PC-3 (cell line): ENCODE measurements at regions of chr2 and their contacts with region 1.

Region 1: GRCh38 chr2:240579771-240580614 is 6.5 kb upstream of the CAPN10 start:
- DNase-seq: peak; percentile 93
- ATAC-seq: peak; percentile 92
- H3K4me3 ChIP-seq: peak overlapping the region; percentile 48; the same call in 1 of the 2 replicates
- H3K27ac ChIP-seq: peak overlapping the region; percentile 91
- H3K4me1 ChIP-seq: peaks cover 52% of the 10 kb centered on the region
- H3K27me3 ChIP-seq: no peaks in the 10 kb centered on the region
- CTCF ChIP-seq: peak; percentile 57

Region 2: GRCh38 chr2:240560480-240561326 is 19.3 kb before region 1 on chr2:
- CTCF ChIA-PET with region 1: interaction called, 31 read pairs
- POLR2A ChIA-PET with region 1: interaction called, 10 read pairs
- intact Hi-C with region 1: loop called (anchors 1 kb)
- DNase-seq: peak; percentile 96
- ATAC-seq: peak; percentile 75
- H3K4me3 ChIP-seq: peak overlapping the region; percentile 77
- H3K27ac ChIP-seq: peak overlapping the region; percentile 91
- H3K4me1 ChIP-seq: peaks cover 42% of the 10 kb centered on the region
- H3K27me3 ChIP-seq: no peaks in the 10 kb centered on the region
- CTCF ChIP-seq: peak; percentile 19; the same call in 1 of the 2 replicates

Region 3: DNA sequence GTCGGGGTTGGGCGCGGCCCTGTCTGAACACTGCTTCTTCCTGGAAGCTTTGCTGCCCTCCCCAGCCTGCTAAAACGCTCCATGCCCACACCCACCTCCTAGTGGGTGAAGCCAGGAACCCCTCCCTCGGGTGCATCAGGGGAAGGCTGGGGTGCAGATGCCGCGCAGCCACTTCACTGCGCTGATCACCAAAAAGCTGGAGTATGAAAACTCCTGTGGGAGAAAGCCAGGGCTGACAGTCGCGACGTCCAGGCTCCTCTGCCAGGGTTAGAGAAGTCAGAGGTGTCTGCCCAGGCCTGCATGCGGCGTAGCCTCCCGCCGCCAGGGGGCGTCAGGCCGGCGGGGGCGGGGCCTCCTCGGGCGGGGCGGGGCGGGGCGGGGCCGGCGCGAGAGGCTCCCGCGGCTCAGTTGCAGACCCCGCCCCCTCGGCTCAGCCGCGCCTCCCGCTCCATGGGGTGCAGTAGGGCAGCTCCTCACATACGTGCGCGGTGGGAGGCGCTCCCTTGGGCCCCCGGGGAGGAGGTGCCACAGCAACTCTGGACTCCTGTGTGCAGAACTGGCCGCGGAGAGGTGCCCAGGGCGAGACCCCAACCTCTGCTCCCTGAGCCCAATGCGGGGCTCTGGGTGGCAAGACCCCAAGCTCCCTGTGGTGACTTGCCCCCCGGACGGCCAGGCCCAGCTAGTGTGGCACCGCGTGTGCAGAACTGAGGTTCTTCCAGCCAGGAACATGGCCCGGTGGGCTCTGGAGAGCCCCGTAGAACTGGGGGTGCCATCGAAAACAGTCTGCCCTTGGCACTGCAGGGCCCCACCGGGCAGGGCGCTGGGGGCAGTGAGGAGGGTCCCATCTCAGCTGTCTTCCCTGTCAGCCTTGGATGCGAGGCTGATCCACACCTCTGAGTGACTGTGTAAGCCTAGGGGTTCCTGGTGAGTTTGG is 13.5 kb before region 1 on chr2:
- CTCF ChIA-PET with region 1: interaction called, 31 read pairs
- POLR2A ChIA-PET with region 1: interaction called, 8 read pairs
- intact Hi-C with region 1: loop called (anchors 1 kb)
- DNase-seq: peak; percentile 81
- ATAC-seq: peak; percentile 60
- H3K4me3 ChIP-seq: peak overlapping the region; percentile 78
- H3K27ac ChIP-seq: peak overlapping the region; percentile 92
- H3K4me1 ChIP-seq: peaks cover 56% of the 10 kb centered on the region
- H3K27me3 ChIP-seq: no peaks in the 10 kb centered on the region
- CTCF ChIP-seq: peak; percentile 61